PC-9 (cell line): ENCODE measurements at regions of chr4 and their contacts with region 1.

Region 1: DNA sequence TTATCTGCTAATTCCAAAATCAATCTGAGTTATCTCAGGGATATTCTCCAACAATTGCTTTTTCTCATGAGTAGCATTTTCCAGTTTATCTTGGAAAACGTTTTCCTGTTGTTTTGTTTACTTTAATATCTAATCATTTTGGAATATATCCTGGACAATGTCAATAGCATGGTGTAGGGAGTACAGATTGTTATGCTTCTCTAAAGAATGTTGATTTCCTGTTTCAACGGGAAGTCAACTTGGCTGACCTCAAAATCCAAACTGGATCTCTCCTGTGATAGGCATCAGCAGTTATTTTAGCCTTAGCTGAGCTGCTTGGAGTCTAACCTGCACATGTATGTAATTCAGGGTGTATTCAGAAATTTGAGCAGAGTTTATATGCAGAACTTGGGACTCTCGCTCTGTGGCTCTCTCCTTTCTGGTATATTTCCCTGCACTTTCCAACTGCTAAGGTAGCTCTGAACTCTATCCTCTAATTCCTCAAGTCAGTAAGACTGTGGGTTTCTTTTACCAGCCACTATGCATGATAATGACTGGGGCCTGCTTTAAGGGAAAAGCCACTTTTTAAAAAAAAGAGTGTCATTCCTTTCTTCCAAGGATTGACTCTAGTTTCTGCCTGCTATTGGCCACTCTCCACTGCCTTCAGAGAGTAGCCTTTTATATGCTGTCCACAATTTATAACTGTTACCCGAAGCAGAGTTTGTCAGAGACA is 7.7 kb downstream of the PRSS48 start:
- DNase-seq: no peak
- H3K4me3 ChIP-seq: no peak overlapping the region
- H3K27ac ChIP-seq: no peak overlapping the region
- H3K4me1 ChIP-seq: no peaks in the 10 kb centered on the region
- H3K27me3 ChIP-seq: no peaks in the 10 kb centered on the region
- CTCF ChIP-seq: no peak

Region 2: GRCh38 chr4:151766700-151767099 is 482.0 kb after region 1 on chr4:
- CTCF ChIA-PET with region 1: no interaction called
- POLR2A ChIA-PET with region 1: interaction called, 26 read pairs
- intact Hi-C with region 1: no loop called
- DNase-seq: no peak
- H3K4me3 ChIP-seq: no peak overlapping the region
- H3K27ac ChIP-seq: no peak overlapping the region
- H3K4me1 ChIP-seq: no peaks in the 10 kb centered on the region; the same call in 1 of the 2 replicates
- H3K27me3 ChIP-seq: no peaks in the 10 kb centered on the region
- CTCF ChIP-seq: no peak